Right ventricle myocardium inferior (tissue), 1 donor: ENCODE measurements at regions of chr2 and their contacts with region 1.

Region 1: DNA sequence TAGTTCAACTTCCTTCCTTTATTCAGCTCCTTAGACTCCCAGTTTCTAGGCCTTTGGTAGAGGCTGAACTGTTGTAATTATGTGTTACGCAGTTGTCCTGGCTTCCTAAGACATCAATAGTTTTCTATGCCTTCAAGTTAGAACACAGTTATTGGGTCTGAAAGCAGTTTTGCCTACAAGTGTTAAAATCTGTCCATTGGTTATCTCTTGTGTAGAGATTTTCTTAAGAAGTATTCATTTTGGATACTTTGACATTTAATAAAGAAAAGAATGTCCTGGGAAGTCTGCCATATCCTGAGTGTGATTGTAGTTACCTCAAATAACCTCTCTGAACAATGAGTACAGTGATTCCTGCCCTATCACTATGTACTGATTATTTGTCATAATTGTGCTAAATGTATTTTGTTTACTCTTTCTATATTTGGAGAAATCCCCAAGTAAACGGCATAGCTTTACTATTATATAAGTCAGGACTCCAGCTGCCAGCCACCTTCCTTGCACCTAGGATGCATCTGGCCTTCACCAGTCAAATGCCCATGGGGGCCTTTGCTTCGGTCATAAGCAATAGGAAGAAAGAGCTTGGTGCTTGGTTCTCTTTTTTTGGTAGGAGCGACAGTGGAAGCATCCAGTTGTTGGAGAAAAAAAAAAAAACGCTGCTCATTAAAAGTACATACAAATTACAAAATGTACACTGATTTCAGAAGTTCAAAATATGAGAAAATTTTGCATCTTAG is 449.5 kb upstream of the PKDCC start:
- DNase-seq: no peak
- ATAC-seq: peak; percentile 86

Region 2: DNA sequence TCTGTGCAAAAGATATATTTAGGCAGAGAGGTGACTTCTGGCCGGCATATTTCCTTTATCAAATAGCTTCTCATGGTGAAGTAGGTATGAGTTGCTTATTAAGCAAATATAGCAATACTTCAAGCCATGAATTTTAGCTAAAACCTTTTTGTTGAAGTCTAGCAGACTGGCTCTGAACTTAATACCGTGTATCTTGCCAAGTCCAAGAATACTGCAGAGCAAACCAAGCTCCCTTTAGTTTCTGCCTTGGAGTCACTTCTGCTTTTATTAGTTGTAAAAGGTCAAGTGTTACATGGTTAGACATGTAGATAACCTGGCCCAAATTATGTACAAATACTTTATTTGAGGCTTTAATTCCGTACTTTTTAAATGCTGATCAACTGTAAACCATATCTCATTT is 178.1 kb before region 1 on chr2:
- intact Hi-C with region 1: loop called (anchors 10 kb)
- DNase-seq: no peak
- ATAC-seq: peak; percentile 56

Region 3: DNA sequence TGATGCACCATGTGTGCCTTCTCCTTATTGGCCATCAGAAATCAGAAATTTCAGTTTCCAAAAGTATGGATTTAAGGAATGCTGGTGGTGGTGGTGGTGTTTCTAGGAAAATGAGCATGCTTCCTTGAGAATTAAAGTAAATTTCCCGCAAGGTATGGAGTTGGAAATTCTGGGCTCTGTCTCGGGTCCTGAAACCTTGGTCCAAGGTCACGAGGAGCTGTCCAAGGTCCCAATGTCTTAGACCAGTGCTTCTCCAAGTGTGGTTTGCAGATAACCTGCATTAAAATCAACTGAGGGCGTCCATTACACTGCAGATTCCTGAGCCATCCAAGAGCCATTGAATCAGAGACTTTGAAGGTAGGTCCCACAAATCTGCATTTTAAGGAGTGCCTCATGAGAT is 238.6 kb after region 1 on chr2:
- intact Hi-C with region 1: no loop called
- DNase-seq: no peak
- ATAC-seq: no peak